ENCODE measurements at regions of chr5 and their contacts with region 1.

Region 1: GRCh38 chr5:112160652-112161391 is 258.3 kb downstream of the EPB41L4A start:
- DNase-seq: peak; percentile 85 to 96 (median 91)
- ATAC-seq: peak; percentile 100
- H3K4me3 ChIP-seq: peak overlapping the region; percentile 73
- H3K4me3 Mint-ChIP-seq: peak overlapping the region; percentile 81 to 96 (median 94)
- H3K27ac ChIP-seq: peak overlapping the region; percentile 80
- H3K27ac Mint-ChIP-seq: peak overlapping the region; percentile 60 to 95 (median 89)
- H3K4me1 ChIP-seq: peaks cover 10 to 16% of the 10 kb centered on the region in 2 donors
- H3K4me1 Mint-ChIP-seq: peaks cover 18 to 41% (median 31%) of the 10 kb centered on the region in 7 donors
- H3K27me3 ChIP-seq: no peaks in the 10 kb centered on the region
- H3K27me3 Mint-ChIP-seq: no peaks in the 10 kb centered on the region

Region 2: GRCh38 chr5:110726249-110727024 is 1434.4 kb before region 1 on chr5 and contains the start of gene TMEM232:
- CTCF ChIA-PET with region 1: no interaction called
- POLR2A ChIA-PET with region 1: no interaction called
- intact Hi-C with region 1: loop called (anchors 1 kb)
- DNase-seq: peak; percentile 40 to 85 (median 65)
- ATAC-seq: peak; percentile 99
- H3K4me3 ChIP-seq: peak within 1 kb of the TSS; percentile 59
- H3K4me3 Mint-ChIP-seq: peak within 1 kb of the TSS; percentile 73 to 97 (median 86)
- H3K27ac ChIP-seq: peak within 1 kb of the TSS; percentile 37
- H3K27ac Mint-ChIP-seq: peak within 1 kb of the TSS in 7 of 9 donors; percentile 15 to 79 (median 65)
- H3K4me1 ChIP-seq: no peaks in the 10 kb centered on the region
- H3K4me1 Mint-ChIP-seq: peaks cover 0 to 8% (median 0%) of the 10 kb centered on the region in 7 donors
- H3K27me3 ChIP-seq: no peaks in the 10 kb centered on the region
- H3K27me3 Mint-ChIP-seq: peaks cover 0 to 3% (median 0%) of the 10 kb centered on the region in 5 donors
- total RNA-seq, gene TMEM232: 1.6 to 3.0 (median 2.9) TPM

Region 3: GRCh38 chr5:111092062-111092853 is 1068.6 kb before region 1 on chr5 and contains the start of gene WDR36:
- CTCF ChIA-PET with region 1: no interaction called
- POLR2A ChIA-PET with region 1: no interaction called
- intact Hi-C with region 1: loop called (anchors 1 kb)
- DNase-seq: peak; percentile 80 to 95 (median 87)
- ATAC-seq: peak; percentile 99
- H3K4me3 ChIP-seq: peak within 1 kb of the TSS; percentile 88
- H3K4me3 Mint-ChIP-seq: peak within 1 kb of the TSS; percentile 91 to 99 (median 98)
- H3K27ac ChIP-seq: peak within 1 kb of the TSS; percentile 82
- H3K27ac Mint-ChIP-seq: peak within 1 kb of the TSS; percentile 66 to 98 (median 94)
- H3K4me1 ChIP-seq: peaks cover 11 to 20% of the 10 kb centered on the region in 2 donors
- H3K4me1 Mint-ChIP-seq: peaks cover 22 to 49% (median 39%) of the 10 kb centered on the region in 7 donors
- H3K27me3 ChIP-seq: no peaks in the 10 kb centered on the region
- H3K27me3 Mint-ChIP-seq: peaks cover 0 to 12% (median 5%) of the 10 kb centered on the region in 5 donors
- total RNA-seq, gene WDR36: 24.8 to 37.4 (median 29.7) TPM

Region 4: DNA sequence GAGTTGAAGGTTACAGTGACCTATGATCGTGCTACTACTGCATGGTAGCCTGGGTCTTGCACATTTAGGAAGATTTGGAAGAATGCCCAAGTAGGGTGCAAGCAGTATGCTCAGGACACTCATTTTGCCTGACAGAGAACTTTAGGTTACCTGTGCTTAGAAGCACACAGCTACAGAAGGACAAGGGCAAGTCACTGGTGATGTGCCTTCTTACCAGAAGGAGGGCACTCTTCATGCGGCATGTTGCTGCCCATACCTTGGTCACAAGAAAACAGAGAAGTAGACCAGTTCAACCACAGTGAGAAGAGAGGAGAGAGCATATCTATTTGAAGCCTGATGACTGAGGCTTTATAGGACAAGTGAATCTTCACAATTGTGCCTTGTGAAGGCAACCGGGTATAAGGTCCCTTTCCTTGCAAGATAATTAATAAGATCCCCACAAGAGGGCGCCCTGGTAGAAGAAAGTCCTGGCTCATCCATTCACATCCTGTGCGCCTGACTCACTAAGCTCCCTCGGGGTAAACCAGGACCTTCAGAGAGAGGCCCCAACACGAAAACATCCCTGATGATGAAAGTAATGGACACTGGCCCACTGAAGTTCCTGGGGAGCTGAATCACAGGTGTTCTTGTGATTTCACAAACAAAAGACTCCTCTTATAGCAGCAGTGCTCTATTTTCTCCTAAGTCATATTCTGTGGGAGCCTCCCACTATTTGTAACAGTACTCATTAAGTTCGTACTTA is 610.4 kb before region 1 on chr5:
- CTCF ChIA-PET with region 1: no interaction called
- POLR2A ChIA-PET with region 1: no interaction called
- intact Hi-C with region 1: loop called in 1 of 2 experiments (anchors 5 kb)
- DNase-seq: peak; percentile 35 to 79 (median 68)
- ATAC-seq: peak; percentile 93
- H3K4me3 ChIP-seq: no peak overlapping the region
- H3K4me3 Mint-ChIP-seq: peak overlapping the region in 1 of 10 donors; percentile 19
- H3K27ac ChIP-seq: no peak overlapping the region
- H3K27ac Mint-ChIP-seq: peak overlapping the region in 2 of 9 donors; percentile 36 to 47
- H3K4me1 ChIP-seq: peaks cover 0 to 12% of the 10 kb centered on the region in 2 donors
- H3K4me1 Mint-ChIP-seq: peaks cover 8 to 22% (median 20%) of the 10 kb centered on the region in 7 donors
- H3K27me3 ChIP-seq: no peaks in the 10 kb centered on the region
- H3K27me3 Mint-ChIP-seq: peaks cover 0 to 4% (median 2%) of the 10 kb centered on the region in 5 donors

Region 5: DNA sequence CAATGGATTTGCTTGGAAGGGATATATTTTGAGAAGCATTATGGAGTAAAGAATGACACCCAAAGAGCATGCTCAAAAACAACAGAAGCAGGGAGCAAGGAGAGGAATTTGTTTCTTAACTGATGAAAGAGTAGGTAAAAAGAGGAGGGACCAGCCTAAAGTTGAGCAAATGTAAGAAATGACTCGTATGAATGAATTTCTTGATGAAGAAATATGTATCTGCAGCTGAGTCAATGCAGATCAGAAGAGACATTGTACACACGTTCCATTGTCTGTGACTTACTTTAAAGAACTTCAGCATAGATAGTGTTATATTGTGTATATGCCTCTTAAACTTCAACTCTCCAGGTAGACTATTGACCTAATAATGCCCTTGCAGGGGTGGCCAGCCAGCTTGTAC is 291.1 kb before region 1 on chr5:
- CTCF ChIA-PET with region 1: no interaction called
- POLR2A ChIA-PET with region 1: no interaction called
- intact Hi-C with region 1: no loop called
- DNase-seq: no peak
- ATAC-seq: no peak
- H3K4me3 ChIP-seq: no peak overlapping the region
- H3K4me3 Mint-ChIP-seq: no peak overlapping the region
- H3K27ac ChIP-seq: no peak overlapping the region
- H3K27ac Mint-ChIP-seq: no peak overlapping the region
- H3K4me1 ChIP-seq: no peaks in the 10 kb centered on the region
- H3K4me1 Mint-ChIP-seq: no peaks in the 10 kb centered on the region
- H3K27me3 ChIP-seq: no peaks in the 10 kb centered on the region
- H3K27me3 Mint-ChIP-seq: no peaks in the 10 kb centered on the region

Region 6: GRCh38 chr5:112419986-112420864 is 259.4 kb after region 1 on chr5:
- CTCF ChIA-PET with region 1: no interaction called
- POLR2A ChIA-PET with region 1: no interaction called
- intact Hi-C with region 1: loop called in 1 of 2 experiments (anchors 1 kb)
- DNase-seq: peak in 1 of 9 donors; percentile 39
- ATAC-seq: peak; percentile 76
- H3K4me3 ChIP-seq: no peak overlapping the region
- H3K4me3 Mint-ChIP-seq: peak overlapping the region in 7 of 10 donors; percentile 37 to 81 (median 56)
- H3K27ac ChIP-seq: no peak overlapping the region
- H3K27ac Mint-ChIP-seq: no peak overlapping the region
- H3K4me1 ChIP-seq: no peaks in the 10 kb centered on the region
- H3K4me1 Mint-ChIP-seq: peaks cover 0 to 17% (median 13%) of the 10 kb centered on the region in 7 donors
- H3K27me3 ChIP-seq: peaks cover 3 to 9% of the 10 kb centered on the region in 2 donors
- H3K27me3 Mint-ChIP-seq: peaks cover 48 to 67% (median 61%) of the 10 kb centered on the region in 5 donors

Region 7: GRCh38 chr5:112976432-112977309 is 815.8 kb after region 1 on chr5 and contains the start of gene DCP2:
- CTCF ChIA-PET with region 1: interaction called, 3 read pairs
- POLR2A ChIA-PET with region 1: interaction called, 5 read pairs
- intact Hi-C with region 1: loop called in 1 of 2 experiments (anchors 1 kb)
- DNase-seq: peak; percentile 84 to 98 (median 97)
- ATAC-seq: peak; percentile 98
- H3K4me3 ChIP-seq: peak within 1 kb of the TSS; percentile 75
- H3K4me3 Mint-ChIP-seq: peak within 1 kb of the TSS; percentile 88 to 99 (median 98)
- H3K27ac ChIP-seq: peak within 1 kb of the TSS; percentile 83
- H3K27ac Mint-ChIP-seq: peak within 1 kb of the TSS; percentile 89 to 98 (median 95)
- H3K4me1 ChIP-seq: peaks cover 7 to 21% of the 10 kb centered on the region in 2 donors
- H3K4me1 Mint-ChIP-seq: peaks cover 35 to 54% (median 51%) of the 10 kb centered on the region in 7 donors
- H3K27me3 ChIP-seq: no peaks in the 10 kb centered on the region
- H3K27me3 Mint-ChIP-seq: no peaks in the 10 kb centered on the region
- total RNA-seq, gene DCP2: 60.2 to 101 (median 85.1) TPM

Measured in naive thymus-derived CD4-positive, alpha-beta T cell (primary cell).